Lower leg skin (tissue), 4 donors: ENCODE measurements at regions of chr4 and their contacts with region 1.

Region 1: DNA sequence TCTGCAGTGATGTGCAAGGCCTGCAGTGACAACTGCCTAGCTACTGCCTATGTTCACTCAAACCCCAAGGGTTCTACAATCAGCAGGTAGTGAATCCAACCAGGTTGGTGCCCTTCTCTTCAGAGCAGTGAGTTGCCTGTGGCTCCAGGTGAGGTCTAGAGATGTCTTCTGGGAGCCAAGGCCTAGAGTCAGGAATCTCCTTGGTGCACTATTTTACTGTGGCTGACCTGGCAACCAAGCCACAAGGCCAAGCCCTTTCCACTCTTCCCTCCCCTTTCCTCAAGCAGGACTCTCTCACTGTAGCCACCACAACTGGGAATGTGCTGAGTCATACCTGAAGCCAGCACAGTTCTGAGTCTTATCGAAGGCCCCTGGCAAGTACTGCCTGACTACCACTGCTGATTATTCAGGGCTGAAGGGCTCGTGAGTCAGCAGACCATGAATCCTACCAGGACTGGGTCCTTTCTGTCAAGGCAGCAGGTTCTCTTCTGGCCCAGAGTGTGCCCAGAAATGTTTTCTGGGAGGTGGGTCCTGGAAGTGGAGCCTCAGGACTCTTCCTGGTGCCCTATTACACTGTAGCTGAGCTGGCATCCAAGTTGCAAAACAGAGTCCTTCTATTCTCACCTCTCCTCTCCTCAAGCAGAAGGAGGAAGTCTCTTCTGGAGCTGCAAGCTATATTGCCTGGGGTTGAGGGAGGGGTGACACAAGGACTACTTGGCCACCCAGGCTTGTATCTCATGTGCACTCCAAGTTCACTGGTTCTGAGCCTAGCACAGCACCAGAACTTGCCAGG is 111.6 kb downstream of the BTC start:
- DNase-seq: no peak
- H3K4me3 ChIP-seq: no peak overlapping the region
- CTCF ChIP-seq: no peak
- POLR2A ChIP-seq: no peak

Region 2: DNA sequence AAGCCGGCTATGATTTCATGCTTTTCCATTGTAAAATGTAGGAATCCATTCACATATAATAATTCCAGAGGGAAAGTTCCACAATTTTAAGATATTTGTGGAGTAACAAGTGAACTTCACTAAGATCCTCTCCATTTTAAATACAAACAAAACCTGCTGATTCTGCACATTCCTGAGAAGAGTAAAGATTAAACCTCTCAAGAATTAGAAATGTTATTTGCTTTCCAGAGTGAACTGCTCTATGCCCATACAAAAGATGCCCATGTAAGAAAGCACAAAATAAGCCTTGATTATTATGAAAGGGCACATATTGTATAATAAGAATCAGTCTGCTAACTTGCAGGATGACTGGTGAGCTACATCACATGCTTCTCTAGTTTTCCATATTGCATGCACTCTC is 1854.8 kb before region 1 on chr4:
- intact Hi-C with region 1: loop called (anchors 5 kb)
- DNase-seq: no peak
- H3K4me3 ChIP-seq: no peak overlapping the region
- CTCF ChIP-seq: no peak
- POLR2A ChIP-seq: no peak